ENCODE measurements at regions of chr19 and their contacts with region 1.

Region 1: GRCh38 chr19:49468746-49469447 is 5.1 kb upstream of the FLT3LG start:
- DNase-seq: peak; percentile 96
- H3K4me3 Mint-ChIP-seq: peak overlapping the region; percentile 77
- H3K27ac Mint-ChIP-seq: peak overlapping the region; percentile 100
- H3K4me1 Mint-ChIP-seq: peaks cover 55% of the 10 kb centered on the region
- H3K27me3 Mint-ChIP-seq: no peaks in the 10 kb centered on the region

Region 2: DNA sequence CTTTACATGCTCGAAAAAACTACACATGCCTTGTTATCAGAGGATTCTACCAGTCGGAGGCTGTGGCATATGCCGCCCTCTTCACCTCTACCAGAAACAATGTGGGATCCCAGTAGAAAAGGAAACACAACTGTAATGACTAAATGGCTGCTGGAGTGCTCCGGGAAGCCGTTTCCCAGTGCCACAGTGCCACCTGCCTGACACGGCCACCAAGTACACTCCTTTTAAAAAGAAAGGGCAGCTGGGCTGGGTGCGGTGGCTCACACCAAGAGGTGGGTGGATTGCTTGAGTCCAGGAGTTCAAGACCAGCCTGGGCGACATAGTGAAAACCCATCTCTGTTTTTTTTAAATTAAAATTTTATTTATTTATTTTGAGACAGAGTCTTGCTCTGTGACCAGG is 244.0 kb before region 1 on chr19:
- CTCF ChIA-PET with region 1: interaction called, 13 read pairs
- POLR2A ChIA-PET with region 1: no interaction called
- DNase-seq: peak; percentile 55
- H3K4me3 Mint-ChIP-seq: no peak overlapping the region
- H3K27ac Mint-ChIP-seq: no peak overlapping the region
- H3K4me1 Mint-ChIP-seq: peaks cover 6% of the 10 kb centered on the region
- H3K27me3 Mint-ChIP-seq: peaks cover 5% of the 10 kb centered on the region

Region 3: DNA sequence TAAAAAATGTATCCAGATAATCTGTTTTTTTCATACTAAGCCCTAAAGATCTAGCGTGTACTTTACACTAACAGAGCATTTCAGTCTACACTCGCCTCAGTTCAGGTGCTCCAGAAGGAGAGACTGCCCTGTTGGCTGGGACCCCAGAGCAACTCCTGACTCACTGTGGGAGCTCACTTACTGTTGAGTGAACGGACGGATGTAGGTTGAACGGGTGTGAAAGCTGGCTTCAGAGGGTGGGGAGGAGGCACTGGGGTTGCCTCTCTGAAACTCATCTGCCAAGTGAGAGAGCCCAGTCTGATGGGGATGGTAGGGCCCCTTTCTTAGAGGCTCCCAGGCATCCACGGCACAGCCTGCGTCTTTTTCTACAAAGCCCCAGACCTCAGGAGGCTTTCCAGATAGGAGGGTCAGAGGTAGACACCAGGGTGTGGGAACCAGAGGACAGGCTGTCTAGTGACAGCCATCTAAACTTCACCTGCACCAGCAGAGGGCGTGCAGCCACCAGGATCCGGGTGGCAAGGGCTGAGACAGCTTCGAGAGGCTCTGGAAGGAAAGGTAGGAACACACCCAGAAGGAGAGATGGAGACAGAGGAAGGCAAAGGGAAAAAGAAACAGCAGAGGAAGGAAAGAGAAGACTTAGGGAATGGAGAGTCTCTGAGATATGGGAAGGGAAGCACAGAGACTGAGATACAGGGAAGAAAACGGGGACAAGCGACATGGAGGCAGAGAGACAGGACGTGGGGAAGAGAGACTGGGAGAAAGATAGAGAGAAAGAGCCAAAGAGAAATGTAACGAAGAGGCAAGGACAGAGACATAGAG is 77.1 kb before region 1 on chr19:
- CTCF ChIA-PET with region 1: interaction called, 55 read pairs
- POLR2A ChIA-PET with region 1: interaction called, 14 read pairs
- DNase-seq: peak; percentile 85
- H3K4me3 Mint-ChIP-seq: no peak overlapping the region
- H3K27ac Mint-ChIP-seq: peak overlapping the region; percentile 29
- H3K4me1 Mint-ChIP-seq: peaks cover 33% of the 10 kb centered on the region
- H3K27me3 Mint-ChIP-seq: peaks cover 10% of the 10 kb centered on the region

Region 4: DNA sequence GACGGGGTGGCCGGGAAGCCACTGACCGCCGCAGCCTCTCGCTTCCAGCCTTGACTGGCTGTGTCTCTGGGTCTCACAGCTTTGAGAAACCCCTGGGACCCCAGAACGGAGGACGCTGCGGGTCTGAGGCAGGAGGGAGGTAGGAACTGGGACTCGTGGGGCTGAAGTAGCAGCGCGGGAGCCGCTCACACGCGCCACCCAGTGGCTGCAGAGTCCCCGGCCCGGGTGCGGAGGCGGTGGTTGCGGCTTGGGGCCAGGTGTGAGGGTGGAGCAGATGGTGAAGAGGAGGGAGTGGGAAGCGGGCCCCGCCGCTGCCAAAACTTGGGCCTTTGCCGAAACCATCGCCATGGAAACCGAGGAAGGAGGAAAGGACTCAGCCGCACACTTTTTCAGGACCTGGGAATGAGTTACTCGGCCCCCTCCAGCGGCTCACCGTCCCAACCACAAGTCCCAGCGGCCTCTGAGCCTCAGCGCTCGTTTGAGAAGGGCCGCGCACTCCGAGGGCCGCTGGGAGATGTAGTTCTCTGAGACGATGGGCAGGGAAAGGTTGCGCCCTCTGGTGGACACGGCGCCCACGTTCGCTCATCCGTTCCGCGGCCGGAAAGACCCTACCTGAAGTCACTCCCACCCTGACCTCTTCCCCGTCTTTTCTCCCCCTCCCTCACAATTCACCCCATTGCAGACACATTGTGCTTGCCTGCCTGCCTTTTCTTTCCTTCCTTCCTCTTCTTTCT is 25.4 kb before region 1 on chr19:
- CTCF ChIA-PET with region 1: interaction called, 17 read pairs
- POLR2A ChIA-PET with region 1: interaction called, 19 read pairs
- DNase-seq: peak; percentile 95
- H3K4me3 Mint-ChIP-seq: peak overlapping the region; percentile 80
- H3K27ac Mint-ChIP-seq: peak overlapping the region; percentile 83
- H3K4me1 Mint-ChIP-seq: peaks cover 62% of the 10 kb centered on the region
- H3K27me3 Mint-ChIP-seq: peaks cover 38% of the 10 kb centered on the region

Region 5: GRCh38 chr19:49458567-49458903 is 10.4 kb before region 1 on chr19:
- CTCF ChIA-PET with region 1: interaction called, 159 read pairs
- POLR2A ChIA-PET with region 1: interaction called, 192 read pairs
- DNase-seq: no peak
- H3K4me3 Mint-ChIP-seq: no peak overlapping the region
- H3K27ac Mint-ChIP-seq: peak overlapping the region; percentile 88
- H3K4me1 Mint-ChIP-seq: peaks cover 44% of the 10 kb centered on the region
- H3K27me3 Mint-ChIP-seq: no peaks in the 10 kb centered on the region

Region 6: GRCh38 chr19:49487277-49488045 is 18.6 kb after region 1 on chr19 and contains the start of gene RPL13A:
- CTCF ChIA-PET with region 1: interaction called, 9 read pairs
- POLR2A ChIA-PET with region 1: interaction called, 24 read pairs
- DNase-seq: peak; percentile 100
- H3K4me3 Mint-ChIP-seq: peak within 1 kb of the TSS; percentile 95
- H3K27ac Mint-ChIP-seq: peak within 1 kb of the TSS; percentile 87
- H3K4me1 Mint-ChIP-seq: peaks cover 50% of the 10 kb centered on the region
- H3K27me3 Mint-ChIP-seq: no peaks in the 10 kb centered on the region
- total RNA-seq, gene RPL13A: 2,417 to 2,463 TPM

Region 7: GRCh38 chr19:49512970-49513745 is 44.3 kb after region 1 on chr19:
- CTCF ChIA-PET with region 1: no interaction called
- POLR2A ChIA-PET with region 1: no interaction called
- DNase-seq: no peak
- H3K4me3 Mint-ChIP-seq: peak overlapping the region; percentile 69
- H3K27ac Mint-ChIP-seq: peak overlapping the region; percentile 62
- H3K4me1 Mint-ChIP-seq: peaks cover 25% of the 10 kb centered on the region
- H3K27me3 Mint-ChIP-seq: no peaks in the 10 kb centered on the region